ENCODE measurements at regions of chr1 and their contacts with region 1.

Region 1: GRCh38 chr1:3369446-3370076 is 84.9 kb upstream of the ARHGEF16 start:
- DNase-seq: no peak
- H3K4me3 ChIP-seq: no peak overlapping the region
- H3K27ac ChIP-seq: peak overlapping the region; percentile 59 to 80 (median 78)
- H3K4me1 ChIP-seq: peaks cover 27 to 46% (median 38%) of the 10 kb centered on the region in 4 donors
- H3K27me3 ChIP-seq: peaks cover 0 to 10% (median 0%) of the 10 kb centered on the region in 4 donors
- CTCF ChIP-seq: no peak
- EP300 ChIP-seq: no peak
- POLR2A ChIP-seq: no peak

Region 2: GRCh38 chr1:3312898-3313575 is 56.5 kb before region 1 on chr1:
- intact Hi-C with region 1: loop called (anchors 5 kb)
- DNase-seq: peak; percentile 98
- H3K4me3 ChIP-seq: peak overlapping the region in 3 of 4 donors; percentile 13 to 41 (median 36)
- H3K27ac ChIP-seq: peak overlapping the region; percentile 94 to 98 (median 96)
- H3K4me1 ChIP-seq: peaks cover 41 to 45% (median 43%) of the 10 kb centered on the region in 4 donors
- H3K27me3 ChIP-seq: peaks cover 0 to 16% (median 0%) of the 10 kb centered on the region in 4 donors
- CTCF ChIP-seq: no peak
- EP300 ChIP-seq: peak; percentile 84
- POLR2A ChIP-seq: no peak

Measured in esophagus muscularis mucosa (tissue), 4 donors.